A673 (cell line): ENCODE measurements at regions of chr5 and their contacts with region 1.

Region 1: GRCh38 chr5:152505442-152506042 is 100.5 kb upstream of the NMUR2 start:
- DNase-seq: peak; percentile 68
- H3K4me3 ChIP-seq: no peak overlapping the region
- H3K27ac ChIP-seq: no peak overlapping the region
- H3K4me1 ChIP-seq: no peaks in the 10 kb centered on the region
- H3K27me3 ChIP-seq: no peaks in the 10 kb centered on the region
- CTCF ChIP-seq: peak; percentile 70

Region 2: GRCh38 chr5:152379331-152379730 is 126.2 kb before region 1 on chr5:
- CTCF ChIA-PET with region 1: no interaction called
- POLR2A ChIA-PET with region 1: no interaction called
- intact Hi-C with region 1: loop called (anchors 5 kb)
- DNase-seq: no peak
- H3K4me3 ChIP-seq: no peak overlapping the region
- H3K27ac ChIP-seq: no peak overlapping the region
- H3K4me1 ChIP-seq: no peaks in the 10 kb centered on the region
- H3K27me3 ChIP-seq: peaks cover 4% of the 10 kb centered on the region
- CTCF ChIP-seq: no peak